ENCODE measurements at regions of chr15 and their contacts with region 1.

Region 1: DNA sequence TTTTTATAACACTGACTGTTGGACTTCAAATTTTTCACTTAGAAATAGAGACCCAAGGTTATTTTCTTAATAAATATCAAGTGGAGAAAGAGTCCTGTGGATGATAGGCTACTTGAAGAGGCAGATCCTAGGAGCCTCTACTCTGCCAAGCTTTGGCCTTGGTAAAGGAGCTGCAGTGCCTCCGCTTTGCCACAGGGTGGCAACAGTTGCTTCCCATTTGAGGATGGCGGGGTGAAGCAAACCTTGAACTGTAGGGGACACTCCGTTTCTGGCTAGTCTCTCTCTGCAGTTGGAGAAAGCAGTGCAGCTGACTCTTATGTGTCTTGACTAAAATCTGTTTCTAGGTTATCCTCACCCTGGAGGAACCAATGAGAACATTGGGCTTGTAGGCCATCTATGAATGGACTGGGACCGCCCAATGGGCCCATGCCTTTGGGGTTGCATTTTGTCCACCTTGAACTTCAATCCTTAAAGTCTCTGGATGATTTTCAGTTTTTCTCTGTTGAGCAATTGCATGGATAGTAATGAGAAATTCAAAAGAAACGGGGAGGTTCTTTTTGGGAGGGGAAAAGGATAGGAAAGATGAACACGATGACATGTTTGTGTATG is 9.8 kb downstream of the SCG5 start:
- DNase-seq: peak; percentile 38
- H3K4me3 ChIP-seq: no peak overlapping the region
- H3K27ac ChIP-seq: no peak overlapping the region
- H3K27me3 ChIP-seq: no peaks in the 10 kb centered on the region
- CTCF ChIP-seq: peak; percentile 98

Region 2: DNA sequence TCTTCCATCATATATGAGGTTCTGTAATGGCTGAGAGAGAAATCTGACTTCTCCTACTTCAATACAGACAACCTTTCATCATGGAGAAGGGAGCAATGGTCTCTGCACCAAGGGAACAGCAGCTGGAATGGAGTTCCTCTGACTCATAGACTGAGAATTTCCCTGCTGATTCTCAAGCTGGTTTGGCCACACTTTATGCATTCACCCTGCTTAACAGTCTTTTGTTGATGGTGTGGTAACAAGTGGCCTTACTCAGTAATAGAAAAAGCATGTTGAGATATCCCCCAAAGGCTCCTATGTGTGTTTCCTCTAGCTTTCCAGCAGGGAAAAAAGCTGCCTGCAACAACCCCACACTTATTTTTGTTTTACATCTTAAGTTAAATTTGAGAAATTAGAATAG is 204.6 kb after region 1 on chr15:
- CTCF ChIA-PET with region 1: interaction called, 12 read pairs
- POLR2A ChIA-PET with region 1: no interaction called
- DNase-seq: peak; percentile 97
- H3K4me3 ChIP-seq: no peak overlapping the region
- H3K27ac ChIP-seq: peak overlapping the region; percentile 94
- H3K27me3 ChIP-seq: no peaks in the 10 kb centered on the region
- CTCF ChIP-seq: peak; percentile 37; the same call in 1 of the 2 replicates

Region 3: GRCh38 chr15:32979710-32980109 is 328.4 kb after region 1 on chr15:
- CTCF ChIA-PET with region 1: interaction called, 13 read pairs
- POLR2A ChIA-PET with region 1: no interaction called
- DNase-seq: peak; percentile 91
- H3K4me3 ChIP-seq: peak overlapping the region; percentile 15
- H3K27ac ChIP-seq: peak overlapping the region; percentile 59
- H3K27me3 ChIP-seq: no peaks in the 10 kb centered on the region
- CTCF ChIP-seq: no peak

Region 4: DNA sequence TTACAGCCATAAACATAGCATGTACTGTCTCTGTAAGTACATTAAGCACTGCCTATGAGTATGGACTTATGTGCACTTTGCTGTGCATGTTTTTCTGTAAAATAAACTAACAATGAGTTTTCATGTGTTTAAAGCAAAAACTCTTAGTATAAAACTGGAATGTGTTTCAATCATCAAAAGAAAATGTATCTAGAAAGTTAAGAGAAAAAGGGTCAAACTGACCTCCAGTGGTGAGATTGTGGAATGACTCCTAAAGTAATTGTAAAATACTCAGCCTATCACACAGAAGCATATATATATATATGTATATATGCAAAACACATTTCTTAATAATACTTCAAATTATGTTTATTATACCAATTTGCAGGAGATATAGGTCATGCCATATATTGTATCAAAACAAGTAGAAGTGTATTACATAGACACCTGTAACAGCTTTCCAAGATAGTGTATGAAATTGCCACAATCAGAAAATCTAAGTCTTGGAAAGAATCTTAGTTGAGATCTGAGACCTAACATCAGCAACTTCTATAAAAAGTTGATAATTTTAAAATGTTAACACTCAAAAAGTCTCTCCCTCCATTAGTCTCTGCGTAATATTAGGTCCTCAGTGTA is 343.6 kb after region 1 on chr15:
- CTCF ChIA-PET with region 1: interaction called, 45 read pairs
- POLR2A ChIA-PET with region 1: no interaction called
- DNase-seq: no peak
- H3K4me3 ChIP-seq: no peak overlapping the region
- H3K27ac ChIP-seq: no peak overlapping the region
- H3K27me3 ChIP-seq: no peaks in the 10 kb centered on the region
- CTCF ChIP-seq: peak; percentile 70

Measured in AG04450 (cell line).